ENCODE measurements at regions of chr17 and their contacts with region 1.

Region 1: GRCh38 chr17:75896415-75897159 is at the start of gene TRIM65:
- DNase-seq: peak; percentile 81
- H3K4me3 ChIP-seq: peak within 1 kb of the TSS; percentile 77 to 80
- H3K27ac ChIP-seq: peak within 1 kb of the TSS; percentile 81 to 92
- H3K4me1 ChIP-seq: peaks cover 2% of the 10 kb centered on the region
- H3K27me3 ChIP-seq: no peaks in the 10 kb centered on the region
- CTCF ChIP-seq: peak in 3 of 4 experiments; percentile 44 to 62 (median 54)
- POLR2A ChIP-seq: peak; percentile 74
- total RNA-seq, gene TRIM65: 27.5 to 28.1 TPM

Region 2: GRCh38 chr17:75764711-75765421 is 131.7 kb before region 1 on chr17 and contains the start of gene GALK1:
- intact Hi-C with region 1: loop called (anchors 5 kb)
- DNase-seq: peak; percentile 59
- H3K4me3 ChIP-seq: peak within 1 kb of the TSS; percentile 59 to 60
- H3K27ac ChIP-seq: peak within 1 kb of the TSS; percentile 77 to 84
- H3K4me1 ChIP-seq: peaks cover 4% of the 10 kb centered on the region
- H3K27me3 ChIP-seq: no peaks in the 10 kb centered on the region
- CTCF ChIP-seq: peak in 3 of 4 experiments; percentile 66 to 87 (median 67)
- POLR2A ChIP-seq: peak; percentile 68
- total RNA-seq, gene GALK1: 28.1 to 28.5 TPM

Region 3: DNA sequence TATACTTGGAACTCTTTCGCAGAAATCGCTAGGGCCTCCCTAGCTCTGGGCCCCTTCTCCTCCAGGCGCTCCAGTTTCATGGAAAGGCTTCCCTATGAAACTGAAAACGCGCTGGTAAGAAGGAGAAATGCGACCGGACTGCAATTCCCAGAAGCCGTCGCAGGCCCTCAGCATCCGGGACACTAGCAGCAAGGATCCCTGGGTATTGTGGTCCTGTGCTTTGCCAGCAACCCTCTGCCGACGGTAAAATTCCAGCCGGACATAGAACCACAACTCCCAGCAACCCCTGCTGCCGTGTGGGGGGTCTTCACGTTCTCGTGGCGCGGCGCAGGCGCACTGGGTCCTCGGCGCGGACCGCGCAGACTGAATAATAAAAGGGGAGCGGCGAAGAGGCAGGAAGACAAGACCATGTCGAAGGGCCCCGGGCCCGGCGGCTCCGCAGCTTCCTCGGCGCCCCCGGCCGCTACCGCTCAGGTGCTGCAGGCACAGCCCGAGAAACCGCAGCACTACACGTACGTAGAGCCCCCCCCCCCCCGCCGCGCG is 112.0 kb before region 1 on chr17 and contains the start of gene UNK:
- intact Hi-C with region 1: loop called (anchors 5 kb)
- DNase-seq: peak; percentile 98
- H3K4me3 ChIP-seq: peak within 1 kb of the TSS; percentile 57 to 66
- H3K27ac ChIP-seq: peak within 1 kb of the TSS; percentile 98 to 99
- H3K4me1 ChIP-seq: peaks cover 15% of the 10 kb centered on the region
- H3K27me3 ChIP-seq: no peaks in the 10 kb centered on the region
- CTCF ChIP-seq: peak in 2 of 4 experiments; percentile 15 to 58
- POLR2A ChIP-seq: peak; percentile 65
- total RNA-seq, gene UNK: 68.9 to 72.5 TPM

Region 4: GRCh38 chr17:75855310-75856081 is 41.1 kb before region 1 on chr17 and contains the start of gene WBP2:
- intact Hi-C with region 1: loop called (anchors 2 kb)
- DNase-seq: peak; percentile 100
- H3K4me3 ChIP-seq: peak within 1 kb of the TSS; percentile 72 to 89
- H3K27ac ChIP-seq: peak within 1 kb of the TSS; percentile 98
- H3K4me1 ChIP-seq: peaks cover 8% of the 10 kb centered on the region
- H3K27me3 ChIP-seq: no peaks in the 10 kb centered on the region
- CTCF ChIP-seq: peak; percentile 31 to 92 (median 50)
- POLR2A ChIP-seq: peak; percentile 99
- total RNA-seq, gene WBP2: 88.9 to 125 TPM